Mammary epithelial cell (primary cell): ENCODE measurements at regions of chr4 and their contacts with region 1.

Region 1: DNA sequence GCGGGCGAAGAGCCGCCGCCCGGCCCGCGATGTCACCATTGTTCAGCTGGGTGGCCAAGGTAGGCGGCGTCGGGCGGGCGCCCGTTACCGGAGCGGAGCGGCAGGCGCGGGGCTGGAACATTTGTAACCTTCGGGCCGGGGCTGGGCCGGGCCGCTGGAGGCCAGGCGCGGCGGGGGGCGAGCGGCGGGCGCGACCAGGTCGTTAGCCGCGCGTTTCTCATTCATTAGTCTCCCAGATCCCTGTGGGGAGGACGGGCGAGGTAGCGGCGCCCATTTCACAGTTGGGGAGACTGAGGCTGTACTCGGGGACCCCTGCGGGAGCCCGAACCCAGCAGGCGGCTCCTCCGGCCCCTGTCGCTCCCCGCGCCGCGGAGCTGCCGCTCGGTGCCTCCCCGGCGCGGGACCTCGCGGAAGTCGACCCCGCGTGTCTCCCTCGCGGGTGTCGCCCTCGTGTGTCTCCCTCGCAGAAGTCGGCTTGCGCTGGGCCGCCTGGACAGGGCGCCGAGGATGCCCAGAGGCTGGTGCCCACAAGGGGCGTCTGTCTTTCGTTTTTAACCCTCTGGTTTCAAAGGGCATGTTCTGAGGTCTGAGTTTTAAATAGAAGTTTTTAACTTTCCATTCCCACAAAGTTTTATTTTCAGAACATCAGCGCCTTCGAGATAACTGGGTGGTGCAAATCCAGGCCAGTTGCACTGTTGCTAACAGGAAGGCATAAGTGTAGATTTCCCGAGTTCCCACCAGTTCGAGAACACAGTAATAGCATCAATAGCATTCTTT is 17.5 kb downstream of the PTTG2 start:
- DNase-seq: peak; percentile 40
- H3K4me3 ChIP-seq: peak overlapping the region; percentile 58 to 67 (median 61)
- H3K27ac ChIP-seq: peak overlapping the region; percentile 34
- H3K4me1 ChIP-seq: peaks cover 5% of the 10 kb centered on the region
- H3K27me3 ChIP-seq: no peaks in the 10 kb centered on the region
- CTCF ChIP-seq: peak; percentile 31 to 58

Region 2: DNA sequence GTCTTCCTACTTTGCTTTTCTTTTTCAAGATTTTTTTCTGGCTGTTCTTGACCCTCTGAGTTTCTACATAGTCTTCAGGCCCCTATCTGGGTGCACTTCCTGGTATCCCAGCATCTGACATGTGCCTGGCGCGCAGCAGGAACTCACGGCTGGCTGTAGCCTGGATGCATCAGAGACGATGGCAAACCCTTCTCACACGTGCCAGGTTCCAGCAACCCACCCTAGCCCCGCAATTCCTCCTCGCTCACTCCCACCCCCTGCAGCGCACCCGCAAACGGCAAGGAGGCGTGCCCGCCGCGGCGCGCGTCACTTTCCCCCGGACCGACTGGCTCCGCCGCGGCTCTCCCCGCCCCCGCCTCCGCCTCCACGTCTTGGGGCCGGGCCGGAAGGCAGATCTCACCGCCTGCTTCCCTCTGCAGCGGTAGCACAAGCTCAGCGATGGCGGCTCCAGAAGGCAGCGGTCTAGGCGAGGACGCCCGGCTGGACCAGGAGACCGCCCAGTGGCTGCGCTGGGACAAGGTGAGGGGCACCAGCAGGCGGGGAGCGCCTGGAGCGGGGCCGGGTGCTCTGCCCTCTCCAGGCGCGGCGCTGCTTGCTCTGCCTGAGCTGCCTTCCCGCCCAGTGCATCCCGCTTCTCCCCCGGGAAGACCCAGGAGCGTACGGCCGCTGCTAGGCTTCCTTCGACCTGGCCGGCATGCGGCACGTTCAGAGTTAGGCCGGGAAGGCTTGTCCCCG is 151.2 kb before region 1 on chr4 and contains the start of gene PGM2:
- CTCF ChIA-PET with region 1: interaction called, 12 read pairs
- dilution Hi-C with region 1: no loop called
- in situ Hi-C with region 1: no loop called
- intact Hi-C with region 1: loop called (anchors 5 kb)
- DNase-seq: peak; percentile 83
- H3K4me3 ChIP-seq: peak within 1 kb of the TSS; percentile 73 to 97 (median 95)
- H3K27ac ChIP-seq: peak within 1 kb of the TSS; percentile 64
- H3K4me1 ChIP-seq: peaks cover 31% of the 10 kb centered on the region
- H3K27me3 ChIP-seq: no peaks in the 10 kb centered on the region
- CTCF ChIP-seq: no peak
- total RNA-seq, gene PGM2: 18.5 to 33.0 TPM

Region 3: DNA sequence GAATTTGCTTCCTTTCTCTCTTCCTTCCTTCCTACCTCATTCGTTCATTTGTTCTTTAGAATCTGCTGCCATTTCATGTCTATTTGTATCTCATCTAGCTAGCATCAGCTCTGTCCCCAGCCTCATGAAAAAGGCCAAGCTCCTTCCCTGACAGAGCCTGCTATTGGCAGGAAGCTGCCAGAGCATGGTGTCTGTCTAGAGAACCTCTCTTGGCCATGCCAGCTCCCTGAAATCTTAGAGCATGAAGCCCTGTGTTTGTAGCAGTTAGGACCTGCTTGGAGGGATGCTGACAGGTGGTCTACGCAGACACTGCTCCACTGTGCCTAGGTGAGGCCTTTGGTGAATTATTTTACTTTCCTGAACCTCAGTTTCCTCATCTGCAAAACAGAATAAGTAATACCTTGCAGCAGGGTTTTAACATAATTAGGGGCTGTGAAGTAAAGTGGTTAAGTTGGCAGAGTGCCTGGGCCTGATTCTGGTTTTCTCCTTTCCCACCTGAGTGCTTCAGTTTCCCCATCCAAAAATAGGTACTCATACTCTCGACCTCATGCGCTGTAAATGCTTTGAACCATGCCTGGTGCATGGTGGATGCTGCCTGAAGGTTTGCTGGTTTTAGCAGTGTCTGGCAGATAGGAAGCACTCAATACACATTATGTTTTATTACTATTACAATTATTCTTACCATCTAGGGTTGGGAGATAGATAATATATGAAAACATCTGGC is 12.8 kb before region 1 on chr4:
- CTCF ChIA-PET with region 1: no interaction called
- dilution Hi-C with region 1: no loop called
- in situ Hi-C with region 1: no loop called
- intact Hi-C with region 1: no loop called
- DNase-seq: no peak
- H3K4me3 ChIP-seq: no peak overlapping the region
- H3K27ac ChIP-seq: no peak overlapping the region
- H3K4me1 ChIP-seq: no peaks in the 10 kb centered on the region
- H3K27me3 ChIP-seq: no peaks in the 10 kb centered on the region
- CTCF ChIP-seq: no peak